ENCODE measurements at regions of chr11 and their contacts with region 1.

Region 1: GRCh38 chr11:11798586-11799438 is 43.0 kb upstream of the USP47 start:
- DNase-seq: peak in 1 of 2 experiments; percentile 59
- H3K4me3 ChIP-seq: no peak overlapping the region
- H3K27ac ChIP-seq: no peak overlapping the region
- H3K4me1 ChIP-seq: no peaks in the 10 kb centered on the region
- H3K27me3 ChIP-seq: no peaks in the 10 kb centered on the region
- CTCF ChIP-seq: peak; percentile 84

Region 2: DNA sequence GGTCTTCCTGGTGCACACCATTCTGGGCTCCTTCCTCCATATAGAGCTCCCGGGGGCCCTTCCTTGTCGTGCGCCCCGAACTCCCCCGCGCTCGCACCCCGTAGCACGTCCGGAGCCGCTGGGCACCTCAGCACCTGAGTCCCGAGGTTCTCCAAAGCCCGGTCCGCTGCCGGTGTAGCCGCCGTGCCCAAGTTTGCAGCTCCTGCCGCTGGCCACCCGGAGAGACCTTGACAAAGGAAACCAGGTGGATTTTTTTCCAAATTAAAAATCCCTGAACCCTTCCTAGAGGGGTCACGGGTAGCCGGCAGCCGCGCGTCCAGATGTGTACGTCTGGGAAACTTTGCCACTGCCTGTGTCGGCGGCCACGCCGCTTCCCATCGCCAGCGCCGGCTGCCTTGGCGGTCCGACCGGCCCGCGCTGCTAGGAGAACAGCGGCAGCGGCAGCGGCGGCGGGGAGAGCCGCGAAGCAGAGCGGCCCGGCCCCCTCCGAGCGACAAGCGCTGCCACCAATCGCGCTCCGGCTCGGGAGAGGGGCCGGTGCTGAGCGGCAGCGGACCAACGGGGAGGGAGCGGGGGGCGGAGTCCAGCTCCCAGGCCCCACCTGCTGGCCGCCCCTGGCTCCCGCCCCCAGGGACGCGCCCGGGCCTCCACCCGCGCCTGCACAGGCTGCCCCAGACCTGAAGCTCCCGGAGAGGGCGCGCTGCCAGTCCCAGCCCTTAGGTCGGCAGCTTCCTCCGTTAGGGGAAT is 177.1 kb before region 1 on chr11 and contains the start of gene GALNT18:
- CTCF ChIA-PET with region 1: no interaction called
- POLR2A ChIA-PET with region 1: no interaction called
- intact Hi-C with region 1: no loop called
- DNase-seq: peak in 1 of 2 experiments; percentile 65
- H3K4me3 ChIP-seq: no peak within 1 kb of the TSS
- H3K27ac ChIP-seq: no peak within 1 kb of the TSS
- H3K4me1 ChIP-seq: no peaks in the 10 kb centered on the region
- H3K27me3 ChIP-seq: peaks cover 22% of the 10 kb centered on the region; the same call in 1 of the 2 replicates
- CTCF ChIP-seq: no peak
- total RNA-seq, gene GALNT18: not detected in 2 replicates

Region 3: DNA sequence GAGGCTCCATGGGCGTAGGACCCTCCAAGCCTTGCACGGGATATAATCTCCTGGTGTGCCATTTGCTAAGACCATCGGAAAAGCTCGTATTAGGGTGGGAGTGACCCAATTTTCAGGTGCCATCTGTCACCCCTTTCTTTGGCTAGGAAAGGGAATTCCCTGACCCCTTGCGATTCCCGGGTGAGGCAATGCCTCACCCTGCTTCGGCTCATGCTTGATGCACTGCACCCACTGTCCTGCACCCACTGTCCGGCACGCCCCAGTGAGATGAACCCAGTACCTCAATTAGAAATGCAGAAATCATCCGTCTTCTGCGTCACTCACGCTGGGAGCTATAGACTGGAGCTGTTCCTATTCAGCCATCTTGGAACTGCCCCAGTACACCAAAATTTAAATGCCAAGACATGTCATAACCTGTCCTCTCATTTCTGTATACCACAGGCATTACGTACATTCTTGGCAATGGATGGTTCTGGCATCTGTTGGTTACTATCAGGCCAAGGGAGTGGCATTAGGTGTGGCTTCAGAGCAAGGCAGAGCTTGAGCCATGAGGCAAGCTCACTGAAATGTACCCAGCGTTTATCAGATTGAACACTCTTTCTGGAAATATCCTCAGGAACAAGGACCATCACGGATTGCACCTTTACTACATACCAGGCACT is 81.6 kb before region 1 on chr11:
- CTCF ChIA-PET with region 1: no interaction called
- POLR2A ChIA-PET with region 1: no interaction called
- intact Hi-C with region 1: no loop called
- DNase-seq: no peak
- H3K4me3 ChIP-seq: no peak overlapping the region
- H3K27ac ChIP-seq: no peak overlapping the region
- H3K4me1 ChIP-seq: no peaks in the 10 kb centered on the region
- H3K27me3 ChIP-seq: no peaks in the 10 kb centered on the region
- CTCF ChIP-seq: no peak

Region 4: GRCh38 chr11:11848891-11849746 is 50.3 kb after region 1 on chr11:
- CTCF ChIA-PET with region 1: interaction called, 3 read pairs
- POLR2A ChIA-PET with region 1: no interaction called
- intact Hi-C with region 1: loop called (anchors 2 kb)
- DNase-seq: peak; percentile 36 to 42
- H3K4me3 ChIP-seq: no peak overlapping the region
- H3K27ac ChIP-seq: no peak overlapping the region
- H3K4me1 ChIP-seq: peaks cover 36% of the 10 kb centered on the region
- H3K27me3 ChIP-seq: no peaks in the 10 kb centered on the region
- CTCF ChIP-seq: peak; percentile 71

Region 5: GRCh38 chr11:11931461-11932055 is 132.7 kb after region 1 on chr11:
- CTCF ChIA-PET with region 1: no interaction called
- POLR2A ChIA-PET with region 1: no interaction called
- intact Hi-C with region 1: loop called (anchors 2 kb)
- DNase-seq: peak in 1 of 2 experiments; percentile 2
- H3K4me3 ChIP-seq: no peak overlapping the region
- H3K27ac ChIP-seq: no peak overlapping the region
- H3K4me1 ChIP-seq: no peaks in the 10 kb centered on the region
- H3K27me3 ChIP-seq: no peaks in the 10 kb centered on the region
- CTCF ChIP-seq: peak; percentile 77

Region 6: GRCh38 chr11:11977206-11977938 is 178.6 kb after region 1 on chr11:
- CTCF ChIA-PET with region 1: no interaction called
- POLR2A ChIA-PET with region 1: no interaction called
- intact Hi-C with region 1: no loop called
- DNase-seq: peak; percentile 43 to 49
- H3K4me3 ChIP-seq: no peak overlapping the region
- H3K27ac ChIP-seq: no peak overlapping the region
- H3K4me1 ChIP-seq: peaks cover 15% of the 10 kb centered on the region
- H3K27me3 ChIP-seq: no peaks in the 10 kb centered on the region
- CTCF ChIP-seq: no peak